Natural killer cell (primary cell): ENCODE measurements at regions of chr1 and their contacts with region 1.

Region 1: GRCh38 chr1:229507951-229508822 is at the start of gene NUP133:
- DNase-seq: peak; percentile 98 to 100
- ATAC-seq: peak; percentile 92 to 96 (median 95)
- H3K4me3 ChIP-seq: peak within 1 kb of the TSS; percentile 83
- H3K4me3 Mint-ChIP-seq: peak within 1 kb of the TSS; percentile 92
- H3K27ac ChIP-seq: peak within 1 kb of the TSS; percentile 92
- H3K27ac Mint-ChIP-seq: peak within 1 kb of the TSS; percentile 96
- H3K4me1 ChIP-seq: peaks cover 7% of the 10 kb centered on the region
- H3K4me1 Mint-ChIP-seq: peaks cover 20 to 25% of the 10 kb centered on the region in 2 donors
- H3K27me3 ChIP-seq: no peaks in the 10 kb centered on the region
- H3K27me3 Mint-ChIP-seq: peaks cover 0 to 4% of the 10 kb centered on the region in 2 donors
- CTCF ChIP-seq: no peak
- total RNA-seq, gene NUP133: 34.5 to 40.1 (median 38.4) TPM

Region 2: GRCh38 chr1:229070168-229070567 is 438.0 kb before region 1 on chr1:
- intact Hi-C with region 1: no loop called
- DNase-seq: no peak
- ATAC-seq: no peak
- H3K4me3 ChIP-seq: no peak overlapping the region
- H3K4me3 Mint-ChIP-seq: no peak overlapping the region
- H3K27ac ChIP-seq: no peak overlapping the region
- H3K27ac Mint-ChIP-seq: no peak overlapping the region
- H3K4me1 ChIP-seq: peaks cover 34% of the 10 kb centered on the region
- H3K4me1 Mint-ChIP-seq: peaks cover 15 to 22% of the 10 kb centered on the region in 2 donors
- H3K27me3 ChIP-seq: no peaks in the 10 kb centered on the region
- H3K27me3 Mint-ChIP-seq: peaks cover 0 to 7% of the 10 kb centered on the region in 2 donors
- CTCF ChIP-seq: no peak

Region 3: GRCh38 chr1:229270547-229271447 is 237.4 kb before region 1 on chr1 and contains the start of gene RAB4A:
- intact Hi-C with region 1: loop called (anchors 1 kb)
- DNase-seq: peak; percentile 83 to 89
- ATAC-seq: peak; percentile 93 to 95 (median 95)
- H3K4me3 ChIP-seq: peak within 1 kb of the TSS; percentile 41
- H3K4me3 Mint-ChIP-seq: peak within 1 kb of the TSS; percentile 94
- H3K27ac ChIP-seq: peak within 1 kb of the TSS; percentile 28
- H3K27ac Mint-ChIP-seq: peak within 1 kb of the TSS; percentile 84 to 88
- H3K4me1 ChIP-seq: peaks cover 18% of the 10 kb centered on the region
- H3K4me1 Mint-ChIP-seq: peaks cover 30 to 31% of the 10 kb centered on the region in 2 donors
- H3K27me3 ChIP-seq: no peaks in the 10 kb centered on the region
- H3K27me3 Mint-ChIP-seq: no peaks in the 10 kb centered on the region
- CTCF ChIP-seq: no peak
- total RNA-seq, gene RAB4A: 31.2 to 47.1 (median 31.6) TPM

Region 4: GRCh38 chr1:229479660-229480399 is 28.4 kb before region 1 on chr1:
- intact Hi-C with region 1: loop called (anchors 2 kb)
- DNase-seq: no peak
- ATAC-seq: peak; percentile 14 to 51 (median 47)
- H3K4me3 ChIP-seq: no peak overlapping the region
- H3K4me3 Mint-ChIP-seq: no peak overlapping the region
- H3K27ac ChIP-seq: peak overlapping the region; percentile 60
- H3K27ac Mint-ChIP-seq: peak overlapping the region; percentile 52 to 71
- H3K4me1 ChIP-seq: peaks cover 3% of the 10 kb centered on the region
- H3K4me1 Mint-ChIP-seq: peaks cover 26 to 29% of the 10 kb centered on the region in 2 donors
- H3K27me3 ChIP-seq: no peaks in the 10 kb centered on the region
- H3K27me3 Mint-ChIP-seq: no peaks in the 10 kb centered on the region
- CTCF ChIP-seq: no peak

Region 5: GRCh38 chr1:229558571-229559335 is 50.6 kb after region 1 on chr1 and contains the start of gene ABCB10:
- intact Hi-C with region 1: loop called (anchors 5 kb)
- DNase-seq: peak; percentile 70 to 92
- ATAC-seq: peak; percentile 72 to 86 (median 80)
- H3K4me3 ChIP-seq: peak within 1 kb of the TSS; percentile 54
- H3K4me3 Mint-ChIP-seq: peak within 1 kb of the TSS; percentile 94
- H3K27ac ChIP-seq: peak within 1 kb of the TSS; percentile 54
- H3K27ac Mint-ChIP-seq: peak within 1 kb of the TSS; percentile 82 to 90
- H3K4me1 ChIP-seq: peaks cover 22% of the 10 kb centered on the region
- H3K4me1 Mint-ChIP-seq: peaks cover 36 to 39% of the 10 kb centered on the region in 2 donors
- H3K27me3 ChIP-seq: no peaks in the 10 kb centered on the region
- H3K27me3 Mint-ChIP-seq: no peaks in the 10 kb centered on the region
- CTCF ChIP-seq: peak; percentile 42
- total RNA-seq, gene ABCB10: 22.0 to 23.3 (median 22.0) TPM

Region 6: DNA sequence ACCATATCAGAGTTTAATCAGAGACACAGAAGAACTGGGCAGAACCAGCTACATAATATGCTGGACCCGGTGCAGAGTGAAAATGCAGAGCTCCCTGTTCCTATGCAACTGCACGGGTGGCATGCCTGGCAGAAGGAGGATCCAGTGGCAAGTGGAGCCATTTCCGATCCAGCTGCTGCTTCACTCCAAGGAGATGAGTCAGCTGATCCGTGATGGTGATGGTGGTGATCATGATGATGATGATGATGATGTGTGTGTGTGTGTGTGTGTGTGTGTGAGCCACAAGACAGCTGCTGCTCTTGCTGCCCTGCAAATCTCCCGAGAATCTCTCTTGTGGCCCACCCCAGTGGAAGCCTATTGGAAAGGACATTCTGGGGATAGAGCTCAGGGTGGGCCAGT is 250.8 kb after region 1 on chr1:
- intact Hi-C with region 1: no loop called
- DNase-seq: no peak
- ATAC-seq: no peak
- H3K4me3 ChIP-seq: no peak overlapping the region
- H3K4me3 Mint-ChIP-seq: no peak overlapping the region
- H3K27ac ChIP-seq: no peak overlapping the region
- H3K27ac Mint-ChIP-seq: no peak overlapping the region
- H3K4me1 ChIP-seq: peaks cover under 1% of the 10 kb centered on the region
- H3K4me1 Mint-ChIP-seq: peaks cover 4 to 5% of the 10 kb centered on the region in 2 donors
- H3K27me3 ChIP-seq: no peaks in the 10 kb centered on the region
- H3K27me3 Mint-ChIP-seq: peaks cover 3 to 10% of the 10 kb centered on the region in 2 donors
- CTCF ChIP-seq: no peak